ENCODE measurements at regions of chr12 and their contacts with region 1.

Region 1: DNA sequence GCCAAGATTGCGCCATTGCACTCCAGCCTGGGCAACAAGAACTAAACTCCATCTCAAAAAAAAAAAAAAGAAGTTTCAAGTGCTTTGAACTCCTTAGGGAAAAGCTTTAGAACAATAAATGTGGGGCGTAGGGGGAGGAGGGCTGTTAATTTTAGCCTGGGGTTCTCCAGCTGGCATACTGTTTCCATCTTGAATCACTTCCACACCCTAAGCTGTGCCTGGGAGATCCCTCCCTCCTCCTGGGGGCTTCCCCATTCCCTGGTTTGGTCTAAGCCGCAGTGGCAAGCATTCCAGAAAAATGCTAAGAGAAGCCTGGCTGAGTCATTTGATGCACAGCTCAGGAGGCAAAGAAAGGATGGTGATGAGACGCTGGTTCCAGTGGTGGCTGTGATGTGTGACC is 2.3 kb upstream of the ZNF384 start:
- DNase-seq: no peak
- H3K4me3 ChIP-seq: no peak overlapping the region
- H3K27ac ChIP-seq: no peak overlapping the region
- H3K4me1 ChIP-seq: peaks cover 21 to 26% of the 10 kb centered on the region in 2 donors
- H3K27me3 ChIP-seq: no peaks in the 10 kb centered on the region
- CTCF ChIP-seq: no peak
- POLR2A ChIP-seq: no peak

Region 2: DNA sequence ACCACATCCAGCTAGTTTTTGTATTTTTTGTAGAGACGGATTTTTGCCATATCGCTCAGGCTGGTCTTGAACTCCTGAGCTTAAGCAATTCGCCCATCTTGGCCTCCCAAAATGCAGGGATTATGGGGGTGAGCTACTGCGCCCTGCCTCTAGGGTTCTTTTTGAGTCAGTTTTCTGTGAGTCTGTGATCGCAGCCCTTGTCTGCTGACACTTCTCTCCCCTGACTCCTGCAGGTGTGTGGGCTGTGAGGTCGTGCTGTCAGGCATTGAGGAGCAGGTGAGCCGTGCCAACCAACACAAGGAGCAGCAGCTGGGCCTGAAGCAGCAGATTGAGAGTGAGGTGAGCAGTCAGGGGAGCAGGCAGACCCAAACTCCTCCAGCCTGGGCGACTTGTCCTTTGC is 38.7 kb after region 1 on chr12:
- intact Hi-C with region 1: loop called (anchors 5 kb)
- DNase-seq: no peak
- H3K4me3 ChIP-seq: no peak overlapping the region
- H3K27ac ChIP-seq: no peak overlapping the region
- H3K4me1 ChIP-seq: peaks cover 0 to 2% of the 10 kb centered on the region in 2 donors
- H3K27me3 ChIP-seq: no peaks in the 10 kb centered on the region
- CTCF ChIP-seq: no peak
- POLR2A ChIP-seq: no peak